ENCODE measurements at regions of chr3 and their contacts with region 1.

Region 1: GRCh38 chr3:132034486-132035464 is at the start of gene CPNE4:
- DNase-seq: peak; percentile 77 to 100
- H3K4me3 ChIP-seq: peak within 1 kb of the TSS; percentile 46 to 79 (median 70)
- H3K27ac ChIP-seq: no peak within 1 kb of the TSS
- H3K4me1 ChIP-seq: no peaks in the 10 kb centered on the region; a peak in 2 of 7 replicates
- H3K27me3 ChIP-seq: peaks cover 0 to 20% (median 8%) of the 10 kb centered on the region in 4 experiments; a peak in 6 of 7 replicates
- CTCF ChIP-seq: peak; percentile 77 to 91 (median 88)
- EP300 ChIP-seq: no peak
- POLR2A ChIP-seq: no peak; a peak in 1 of 3 replicates
- RAD21 ChIP-seq: peak; percentile 67 to 77
- total RNA-seq, gene CPNE4: 1.9 and 3.8 TPM in 2 replicates

Region 2: DNA sequence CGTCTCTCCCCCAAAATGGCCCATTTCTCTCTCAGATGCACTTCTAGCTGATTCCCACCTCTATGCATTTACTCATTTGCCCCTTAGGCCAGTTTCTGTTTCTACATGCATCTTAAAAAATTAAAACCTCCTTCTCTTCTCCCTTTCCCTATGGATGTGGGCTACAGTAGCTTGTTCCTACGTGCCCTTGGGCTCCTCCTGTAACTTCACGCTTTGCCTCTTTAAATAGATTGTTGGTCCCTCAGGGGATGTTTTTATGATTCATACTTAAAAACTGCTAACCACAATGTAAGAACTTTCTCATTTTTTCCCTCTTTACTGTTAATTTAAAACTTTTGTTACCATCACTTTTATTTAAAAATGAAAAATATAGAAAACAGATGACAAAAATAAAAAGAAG is 346.4 kb before region 1 on chr3:
- CTCF ChIA-PET with region 1: no interaction called
- POLR2A ChIA-PET with region 1: no interaction called
- DNase-seq: no peak
- H3K4me3 ChIP-seq: no peak overlapping the region
- H3K27ac ChIP-seq: no peak overlapping the region
- H3K4me1 ChIP-seq: no peaks in the 10 kb centered on the region
- H3K27me3 ChIP-seq: no peaks in the 10 kb centered on the region
- CTCF ChIP-seq: no peak
- EP300 ChIP-seq: no peak
- POLR2A ChIP-seq: no peak
- RAD21 ChIP-seq: no peak

Region 3: GRCh38 chr3:132047209-132047608 is 12.4 kb after region 1 on chr3:
- CTCF ChIA-PET with region 1: interaction called, 11 read pairs
- POLR2A ChIA-PET with region 1: no interaction called
- DNase-seq: no peak
- H3K4me3 ChIP-seq: no peak overlapping the region
- H3K27ac ChIP-seq: no peak overlapping the region
- H3K4me1 ChIP-seq: no peaks in the 10 kb centered on the region
- H3K27me3 ChIP-seq: no peaks in the 10 kb centered on the region
- CTCF ChIP-seq: no peak
- EP300 ChIP-seq: no peak
- POLR2A ChIP-seq: no peak
- RAD21 ChIP-seq: no peak

Region 4: GRCh38 chr3:132135628-132136333 is 101.0 kb after region 1 on chr3:
- CTCF ChIA-PET with region 1: interaction called, 11 read pairs
- POLR2A ChIA-PET with region 1: no interaction called
- DNase-seq: peak in 1 of 2 experiments; percentile 27
- H3K4me3 ChIP-seq: no peak overlapping the region
- H3K27ac ChIP-seq: no peak overlapping the region
- H3K4me1 ChIP-seq: peaks cover 3 to 7% (median 6%) of the 10 kb centered on the region in 4 experiments; a peak in 5 of 7 replicates
- H3K27me3 ChIP-seq: no peaks in the 10 kb centered on the region
- CTCF ChIP-seq: no peak
- EP300 ChIP-seq: no peak
- POLR2A ChIP-seq: no peak
- RAD21 ChIP-seq: no peak

Region 5: GRCh38 chr3:132210476-132211346 is 175.9 kb after region 1 on chr3:
- CTCF ChIA-PET with region 1: interaction called, 110 read pairs
- POLR2A ChIA-PET with region 1: no interaction called
- DNase-seq: peak; percentile 49 to 84
- H3K4me3 ChIP-seq: no peak overlapping the region
- H3K27ac ChIP-seq: no peak overlapping the region
- H3K4me1 ChIP-seq: peaks cover 0 to 4% (median under 1%) of the 10 kb centered on the region in 4 experiments; a peak in 2 of 7 replicates
- H3K27me3 ChIP-seq: peaks cover 27 to 42% (median 40%) of the 10 kb centered on the region in 4 experiments
- CTCF ChIP-seq: peak; percentile 88 to 93 (median 90)
- EP300 ChIP-seq: no peak
- POLR2A ChIP-seq: no peak
- RAD21 ChIP-seq: peak; percentile 91 to 95

Measured in H1 (cell line).